A673 (cell line): ENCODE measurements at regions of chr12 and their contacts with region 1.

Region 1: DNA sequence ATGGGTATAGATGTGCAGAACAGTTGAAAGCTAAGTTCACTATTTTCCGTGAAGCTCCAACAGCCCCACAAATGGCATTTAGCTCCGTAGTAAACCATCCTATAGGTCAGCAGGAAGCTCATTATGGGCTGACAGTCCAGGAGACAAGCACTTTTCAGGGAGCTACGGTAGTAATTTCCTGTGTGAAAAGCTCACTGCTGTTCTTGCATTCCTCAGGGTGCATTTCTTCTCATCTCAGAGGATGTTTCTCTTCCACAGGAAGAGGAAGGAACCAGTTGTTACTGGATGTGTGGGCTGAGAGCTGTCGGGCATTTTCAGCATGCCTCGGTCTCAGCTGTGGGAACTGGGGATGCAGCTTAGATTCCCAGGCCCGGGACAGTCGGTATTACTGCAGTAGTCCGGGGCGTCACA is 72.8 kb downstream of the GALNT4 start:
- DNase-seq: peak; percentile 96
- H3K4me3 ChIP-seq: peak overlapping the region; percentile 11
- H3K27ac ChIP-seq: peak overlapping the region; percentile 97
- H3K4me1 ChIP-seq: peaks cover 80% of the 10 kb centered on the region
- H3K27me3 ChIP-seq: no peaks in the 10 kb centered on the region
- CTCF ChIP-seq: no peak

Region 2: GRCh38 chr12:88163371-88163770 is 1288.5 kb before region 1 on chr12:
- CTCF ChIA-PET with region 1: no interaction called
- POLR2A ChIA-PET with region 1: interaction called, 11 read pairs
- intact Hi-C with region 1: no loop called
- DNase-seq: no peak
- H3K4me3 ChIP-seq: no peak overlapping the region
- H3K27ac ChIP-seq: no peak overlapping the region
- H3K4me1 ChIP-seq: no peaks in the 10 kb centered on the region
- H3K27me3 ChIP-seq: no peaks in the 10 kb centered on the region
- CTCF ChIP-seq: no peak

Region 3: DNA sequence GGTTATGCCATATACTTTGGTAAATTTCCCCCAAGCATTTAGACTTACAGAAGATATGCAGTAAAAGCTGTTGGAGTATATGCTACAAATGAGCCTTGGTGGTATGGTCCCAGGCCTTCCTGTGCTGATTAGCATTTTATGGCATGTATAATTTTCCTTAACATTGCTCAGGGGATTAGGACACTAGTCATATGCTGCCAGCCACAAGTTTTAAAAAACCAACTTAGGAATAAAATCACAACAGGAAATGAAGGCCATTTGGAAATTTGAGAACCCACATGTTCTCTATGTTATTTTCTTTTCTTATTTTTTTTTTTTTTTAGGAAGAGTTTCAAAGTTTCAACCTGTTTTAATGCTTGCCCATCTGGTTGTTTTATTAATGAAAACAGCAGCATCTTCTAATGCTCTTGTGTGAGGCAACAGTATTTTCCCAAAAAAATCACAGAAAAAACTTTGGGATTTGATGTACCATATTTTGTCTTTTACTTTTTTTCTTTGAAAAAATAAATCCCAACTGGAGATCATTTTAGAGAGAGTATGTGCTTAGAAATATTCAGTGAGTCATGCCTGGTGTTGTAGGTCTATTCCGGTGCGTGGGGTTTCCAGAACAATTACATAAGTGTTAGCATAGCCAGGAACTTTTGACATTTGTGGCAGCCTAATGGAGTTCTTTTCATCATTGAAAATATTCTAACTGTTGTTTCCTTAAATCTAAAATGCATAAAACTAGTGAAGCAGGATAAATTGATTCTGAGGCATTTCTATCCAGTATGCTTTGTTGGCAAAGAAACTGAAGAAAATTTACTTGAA is 77.9 kb before region 1 on chr12:
- CTCF ChIA-PET with region 1: no interaction called
- POLR2A ChIA-PET with region 1: no interaction called
- intact Hi-C with region 1: loop called (anchors 5 kb)
- DNase-seq: peak; percentile 95
- H3K4me3 ChIP-seq: peak overlapping the region; percentile 10
- H3K27ac ChIP-seq: peak overlapping the region; percentile 85
- H3K4me1 ChIP-seq: peaks cover 69% of the 10 kb centered on the region
- H3K27me3 ChIP-seq: no peaks in the 10 kb centered on the region
- CTCF ChIP-seq: no peak

Region 4: GRCh38 chr12:89389755-89390661 is 61.8 kb before region 1 on chr12:
- CTCF ChIA-PET with region 1: no interaction called
- POLR2A ChIA-PET with region 1: interaction called, 3 read pairs
- intact Hi-C with region 1: loop called (anchors 1 kb)
- DNase-seq: peak; percentile 96
- H3K4me3 ChIP-seq: no peak overlapping the region
- H3K27ac ChIP-seq: peak overlapping the region; percentile 88
- H3K4me1 ChIP-seq: peaks cover 76% of the 10 kb centered on the region
- H3K27me3 ChIP-seq: no peaks in the 10 kb centered on the region
- CTCF ChIP-seq: no peak